ENCODE measurements at regions of chr13 and their contacts with region 1.

Region 1: DNA sequence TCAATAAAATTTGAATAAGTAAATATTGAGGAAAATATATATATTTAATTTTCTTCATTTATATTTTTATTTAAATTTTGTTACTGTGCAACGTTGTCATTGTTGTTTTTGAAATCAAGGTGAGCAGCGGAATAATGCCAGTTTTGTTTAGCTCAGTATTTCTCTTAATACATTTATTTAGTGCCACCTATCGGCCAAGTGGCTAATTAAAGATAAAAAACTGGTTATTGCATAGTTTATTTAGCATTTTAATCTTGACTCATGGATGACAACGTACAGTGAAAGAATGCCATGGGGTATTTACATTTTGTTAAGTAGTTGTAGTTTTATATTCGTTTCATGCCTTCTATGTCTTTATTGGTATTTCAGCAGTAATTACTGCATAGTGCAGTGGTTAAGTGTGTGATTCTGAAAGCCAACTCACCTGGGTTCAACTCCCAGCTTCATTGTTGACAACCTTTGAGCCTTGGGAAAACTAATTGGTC is 265.9 kb downstream of the MYO16 start:
- DNase-seq: peak; percentile 69
- ATAC-seq: peak; percentile 67
- H3K4me3 ChIP-seq: no peak overlapping the region
- H3K27ac ChIP-seq: no peak overlapping the region
- H3K4me1 ChIP-seq: no peaks in the 10 kb centered on the region; the same call in 1 of the 2 replicates
- H3K27me3 ChIP-seq: peaks cover 7% of the 10 kb centered on the region; the same call in 1 of the 2 replicates
- CTCF ChIP-seq: peak; percentile 68
- POLR2A ChIP-seq: no peak
- RAD21 ChIP-seq: peak; percentile 63

Region 2: GRCh38 chr13:108227651-108228272 is 667.5 kb before region 1 on chr13:
- CTCF ChIA-PET with region 1: no interaction called
- POLR2A ChIA-PET with region 1: no interaction called
- dilution Hi-C with region 1: no loop called
- in situ Hi-C with region 1: no loop called
- intact Hi-C with region 1: loop called (anchors 2 kb)
- DNase-seq: peak; percentile 52
- ATAC-seq: peak; percentile 75
- H3K4me3 ChIP-seq: no peak overlapping the region
- H3K27ac ChIP-seq: no peak overlapping the region
- H3K4me1 ChIP-seq: peaks cover 8% of the 10 kb centered on the region; the same call in 1 of the 2 replicates
- H3K27me3 ChIP-seq: no peaks in the 10 kb centered on the region
- CTCF ChIP-seq: peak; percentile 74
- POLR2A ChIP-seq: no peak
- RAD21 ChIP-seq: peak; percentile 54

Region 3: GRCh38 chr13:108322206-108322824 is 572.9 kb before region 1 on chr13:
- CTCF ChIA-PET with region 1: no interaction called
- POLR2A ChIA-PET with region 1: no interaction called
- dilution Hi-C with region 1: no loop called
- in situ Hi-C with region 1: loop called (anchors 5 kb)
- intact Hi-C with region 1: loop called (anchors 1 kb)
- DNase-seq: peak; percentile 52
- ATAC-seq: peak; percentile 88
- H3K4me3 ChIP-seq: no peak overlapping the region
- H3K27ac ChIP-seq: no peak overlapping the region
- H3K4me1 ChIP-seq: no peaks in the 10 kb centered on the region
- H3K27me3 ChIP-seq: peaks cover 17% of the 10 kb centered on the region
- CTCF ChIP-seq: peak; percentile 82
- POLR2A ChIP-seq: no peak
- RAD21 ChIP-seq: peak; percentile 77

Region 4: GRCh38 chr13:108342369-108343289 is 552.6 kb before region 1 on chr13:
- CTCF ChIA-PET with region 1: interaction called, 3 read pairs
- POLR2A ChIA-PET with region 1: no interaction called
- dilution Hi-C with region 1: no loop called
- in situ Hi-C with region 1: no loop called
- intact Hi-C with region 1: loop called (anchors 2 kb)
- DNase-seq: peak; percentile 35
- ATAC-seq: peak; percentile 51; the same call in 1 of the 2 replicates
- H3K4me3 ChIP-seq: no peak overlapping the region
- H3K27ac ChIP-seq: no peak overlapping the region
- H3K4me1 ChIP-seq: no peaks in the 10 kb centered on the region
- H3K27me3 ChIP-seq: peaks cover 10% of the 10 kb centered on the region
- CTCF ChIP-seq: peak; percentile 53
- POLR2A ChIP-seq: no peak
- RAD21 ChIP-seq: peak; percentile 50

Region 5: DNA sequence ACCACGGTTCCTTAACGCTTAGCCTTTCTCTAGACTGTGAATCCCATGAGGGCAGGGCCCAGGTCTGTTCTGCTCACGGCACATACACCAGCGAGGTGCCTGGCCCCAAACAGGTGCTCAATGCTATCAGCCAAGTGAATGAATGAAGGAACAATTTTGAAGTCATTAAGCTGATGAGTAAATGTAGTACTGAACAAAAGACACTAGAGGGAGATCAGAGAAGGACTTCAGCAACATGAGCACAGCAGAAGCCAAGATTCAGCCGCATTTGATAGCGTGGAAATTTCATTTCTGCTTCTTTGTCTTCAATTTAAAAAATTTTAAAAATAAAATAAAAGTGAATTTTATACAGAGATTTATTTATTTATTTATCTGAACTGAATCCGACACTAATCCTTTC is 285.9 kb before region 1 on chr13:
- CTCF ChIA-PET with region 1: interaction called, 12 read pairs
- POLR2A ChIA-PET with region 1: no interaction called
- dilution Hi-C with region 1: no loop called
- in situ Hi-C with region 1: no loop called
- intact Hi-C with region 1: loop called (anchors 1 kb)
- DNase-seq: peak; percentile 49
- ATAC-seq: peak; percentile 75
- H3K4me3 ChIP-seq: no peak overlapping the region
- H3K27ac ChIP-seq: no peak overlapping the region
- H3K4me1 ChIP-seq: no peaks in the 10 kb centered on the region
- H3K27me3 ChIP-seq: no peaks in the 10 kb centered on the region
- CTCF ChIP-seq: peak; percentile 59
- POLR2A ChIP-seq: no peak
- RAD21 ChIP-seq: peak; percentile 61

Region 6: DNA sequence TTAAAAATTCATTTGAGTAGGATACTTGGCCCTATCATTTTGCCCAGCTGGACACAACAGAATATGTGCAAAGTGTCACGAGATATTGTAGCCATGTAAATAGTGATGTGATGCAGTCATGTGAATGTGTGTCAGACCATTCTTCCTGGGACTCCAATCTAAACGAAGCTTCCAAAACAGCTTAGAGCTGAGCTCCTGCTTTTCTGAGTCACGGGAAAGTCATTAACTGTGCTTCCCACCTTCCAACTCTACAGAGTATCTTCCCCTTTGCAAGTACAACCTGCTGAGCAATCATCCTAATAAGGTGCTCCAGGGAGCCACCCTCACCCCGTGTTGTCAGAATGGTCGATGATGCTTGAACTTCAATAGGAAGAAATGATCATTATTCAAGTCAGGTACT is 28.9 kb after region 1 on chr13:
- CTCF ChIA-PET with region 1: no interaction called
- POLR2A ChIA-PET with region 1: no interaction called
- dilution Hi-C with region 1: no loop called
- in situ Hi-C with region 1: no loop called
- intact Hi-C with region 1: no loop called
- DNase-seq: peak; percentile 84
- ATAC-seq: peak; percentile 74
- H3K4me3 ChIP-seq: no peak overlapping the region
- H3K27ac ChIP-seq: no peak overlapping the region; the same call in 1 of the 2 replicates
- H3K4me1 ChIP-seq: peaks cover 2% of the 10 kb centered on the region
- H3K27me3 ChIP-seq: no peaks in the 10 kb centered on the region
- CTCF ChIP-seq: no peak
- POLR2A ChIP-seq: no peak
- RAD21 ChIP-seq: no peak

Region 7: DNA sequence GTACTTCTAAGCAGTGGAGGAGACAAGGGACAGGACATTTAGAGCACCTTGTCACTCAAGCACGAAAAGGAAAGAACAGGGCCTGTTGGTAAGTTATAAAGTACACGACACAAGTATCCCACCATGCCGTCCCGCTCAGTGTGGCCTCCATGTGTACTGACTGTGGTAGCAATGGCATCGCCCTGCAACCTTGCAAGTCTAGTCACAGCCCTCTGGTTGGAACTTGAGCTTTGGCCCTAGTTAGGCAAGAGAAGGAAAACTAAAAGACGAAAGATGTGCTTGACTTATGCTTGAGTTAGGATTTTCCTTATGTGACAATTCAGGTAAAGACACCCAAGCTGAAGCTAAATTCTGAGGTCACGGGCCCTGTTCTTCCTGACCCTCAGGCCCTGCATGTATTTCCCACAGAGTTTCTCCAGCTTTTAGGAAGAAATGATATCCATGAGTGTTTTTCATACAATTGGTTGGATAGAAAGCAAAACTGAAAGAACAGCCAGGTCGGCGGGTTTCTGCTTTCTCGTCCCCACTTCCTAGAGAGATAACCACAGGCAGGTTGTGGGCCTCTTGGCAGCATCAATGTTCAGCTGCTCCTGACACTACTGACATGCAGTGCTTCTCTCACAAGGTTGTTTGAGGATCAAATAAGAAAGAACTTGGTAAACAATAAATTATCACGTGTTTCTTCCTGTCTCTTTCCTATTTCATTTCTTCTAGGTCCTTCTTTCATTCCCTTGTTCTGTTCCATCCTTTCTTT is 674.9 kb after region 1 on chr13:
- CTCF ChIA-PET with region 1: no interaction called
- POLR2A ChIA-PET with region 1: no interaction called
- dilution Hi-C with region 1: no loop called
- in situ Hi-C with region 1: no loop called
- intact Hi-C with region 1: no loop called
- DNase-seq: no peak
- ATAC-seq: no peak
- H3K4me3 ChIP-seq: no peak overlapping the region
- H3K27ac ChIP-seq: no peak overlapping the region
- H3K4me1 ChIP-seq: no peaks in the 10 kb centered on the region
- H3K27me3 ChIP-seq: peaks cover 8% of the 10 kb centered on the region
- CTCF ChIP-seq: no peak
- POLR2A ChIP-seq: no peak
- RAD21 ChIP-seq: no peak

Measured in IMR-90 (cell line).